Common myeloid progenitor, CD34-positive (primary cell): ENCODE measurements at regions of chr1 and their contacts with region 1.

Region 1: DNA sequence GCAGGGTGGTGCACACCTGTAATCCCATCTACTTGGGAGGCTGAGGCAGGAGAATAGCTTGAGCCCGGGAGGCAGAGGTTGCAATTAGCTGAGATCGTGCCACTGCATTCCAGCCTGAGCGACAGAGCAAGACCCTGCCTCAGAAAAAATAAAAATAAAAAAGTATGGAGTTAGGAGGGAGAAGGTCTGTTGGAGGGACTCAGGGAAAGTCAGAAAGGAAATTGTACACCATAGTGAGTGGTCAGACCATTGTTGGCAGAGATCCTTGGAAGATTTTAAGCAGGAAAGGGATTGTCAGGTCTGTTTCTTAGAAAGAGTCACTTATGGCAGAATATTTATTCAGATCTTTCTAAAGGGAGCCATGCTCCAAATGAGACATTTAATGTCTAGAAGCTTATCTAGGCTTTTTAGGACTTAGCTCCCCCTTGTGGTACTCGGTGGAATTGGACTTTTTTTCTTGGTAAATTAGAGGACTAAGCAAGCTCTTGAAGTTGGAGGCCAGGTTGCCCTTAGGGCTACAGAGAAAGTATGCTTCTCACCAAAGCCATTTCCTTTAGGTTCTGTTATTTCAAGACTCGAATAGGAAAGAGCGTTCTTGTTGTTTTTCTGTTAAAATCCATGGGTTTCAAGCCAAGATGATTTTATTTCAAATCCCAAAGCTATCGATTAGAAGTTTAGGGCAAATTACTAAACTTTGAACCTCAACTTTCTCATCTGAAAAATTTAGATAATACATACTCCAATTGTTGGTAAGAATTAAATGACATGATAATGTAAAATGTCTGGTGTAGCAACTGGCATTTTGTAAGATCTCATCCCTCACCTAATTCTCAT is 16.5 kb downstream of the MIA3 start:
- DNase-seq: peak; percentile 88 to 96 (median 91)
- H3K4me3 ChIP-seq: no peak overlapping the region
- H3K27ac ChIP-seq: no peak overlapping the region
- H3K4me1 ChIP-seq: peaks cover 0 to 13% (median 0%) of the 10 kb centered on the region in 4 experiments
- H3K27me3 ChIP-seq: no peaks in the 10 kb centered on the region

Region 2: GRCh38 chr1:222465211-222466041 is 169.0 kb before region 1 on chr1:
- CTCF ChIA-PET with region 1: interaction called, 42 read pairs
- POLR2A ChIA-PET with region 1: no interaction called
- DNase-seq: peak; percentile 83 to 93 (median 92)
- H3K4me3 ChIP-seq: peak overlapping the region; percentile 33 to 84 (median 74)
- H3K27ac ChIP-seq: peak overlapping the region; percentile 74 to 80
- H3K4me1 ChIP-seq: peaks cover 0 to 7% (median 3%) of the 10 kb centered on the region in 4 experiments
- H3K27me3 ChIP-seq: no peaks in the 10 kb centered on the region

Region 3: GRCh38 chr1:222600281-222600680 is 34.1 kb before region 1 on chr1:
- CTCF ChIA-PET with region 1: no interaction called
- POLR2A ChIA-PET with region 1: no interaction called
- DNase-seq: no peak
- H3K4me3 ChIP-seq: no peak overlapping the region
- H3K27ac ChIP-seq: no peak overlapping the region
- H3K4me1 ChIP-seq: no peaks in the 10 kb centered on the region
- H3K27me3 ChIP-seq: no peaks in the 10 kb centered on the region

Region 4: GRCh38 chr1:222618880-222619596 is 15.4 kb before region 1 on chr1:
- CTCF ChIA-PET with region 1: interaction called, 16 read pairs
- POLR2A ChIA-PET with region 1: no interaction called
- DNase-seq: peak in 2 of 3 donors; percentile 13 to 28
- H3K4me3 ChIP-seq: peak overlapping the region; percentile 70 to 92 (median 82)
- H3K27ac ChIP-seq: peak overlapping the region in 1 of 2 experiments; percentile 63
- H3K4me1 ChIP-seq: peaks cover 0 to 16% (median 10%) of the 10 kb centered on the region in 4 experiments
- H3K27me3 ChIP-seq: peaks cover 0 to 3% (median 0%) of the 10 kb centered on the region in 5 experiments

Region 5: DNA sequence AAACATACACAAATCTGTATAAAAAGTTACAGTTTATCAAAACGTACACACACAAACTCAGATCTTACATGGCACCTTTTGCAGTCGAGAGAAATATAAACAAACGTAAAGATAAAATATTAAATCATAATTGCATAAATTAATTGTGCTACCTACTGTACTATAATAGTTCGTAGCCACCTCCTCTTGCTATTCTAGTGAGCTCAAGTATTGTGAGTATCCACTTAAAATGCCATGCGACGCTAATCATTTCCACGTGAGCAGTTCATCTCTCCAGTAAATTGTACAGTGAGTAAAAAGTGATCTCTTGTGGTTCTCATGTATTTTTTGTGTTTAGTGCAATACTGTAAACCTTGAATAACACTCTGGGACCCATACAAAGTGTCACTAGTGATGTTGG is 10.2 kb before region 1 on chr1:
- CTCF ChIA-PET with region 1: interaction called, 16 read pairs
- POLR2A ChIA-PET with region 1: no interaction called
- DNase-seq: no peak
- H3K4me3 ChIP-seq: no peak overlapping the region
- H3K27ac ChIP-seq: no peak overlapping the region
- H3K4me1 ChIP-seq: peaks cover 0 to 3% (median under 1%) of the 10 kb centered on the region in 4 experiments
- H3K27me3 ChIP-seq: no peaks in the 10 kb centered on the region